CD8-positive, alpha-beta memory T cell (primary cell): ENCODE measurements at regions of chr9 and their contacts with region 1.

Region 1: DNA sequence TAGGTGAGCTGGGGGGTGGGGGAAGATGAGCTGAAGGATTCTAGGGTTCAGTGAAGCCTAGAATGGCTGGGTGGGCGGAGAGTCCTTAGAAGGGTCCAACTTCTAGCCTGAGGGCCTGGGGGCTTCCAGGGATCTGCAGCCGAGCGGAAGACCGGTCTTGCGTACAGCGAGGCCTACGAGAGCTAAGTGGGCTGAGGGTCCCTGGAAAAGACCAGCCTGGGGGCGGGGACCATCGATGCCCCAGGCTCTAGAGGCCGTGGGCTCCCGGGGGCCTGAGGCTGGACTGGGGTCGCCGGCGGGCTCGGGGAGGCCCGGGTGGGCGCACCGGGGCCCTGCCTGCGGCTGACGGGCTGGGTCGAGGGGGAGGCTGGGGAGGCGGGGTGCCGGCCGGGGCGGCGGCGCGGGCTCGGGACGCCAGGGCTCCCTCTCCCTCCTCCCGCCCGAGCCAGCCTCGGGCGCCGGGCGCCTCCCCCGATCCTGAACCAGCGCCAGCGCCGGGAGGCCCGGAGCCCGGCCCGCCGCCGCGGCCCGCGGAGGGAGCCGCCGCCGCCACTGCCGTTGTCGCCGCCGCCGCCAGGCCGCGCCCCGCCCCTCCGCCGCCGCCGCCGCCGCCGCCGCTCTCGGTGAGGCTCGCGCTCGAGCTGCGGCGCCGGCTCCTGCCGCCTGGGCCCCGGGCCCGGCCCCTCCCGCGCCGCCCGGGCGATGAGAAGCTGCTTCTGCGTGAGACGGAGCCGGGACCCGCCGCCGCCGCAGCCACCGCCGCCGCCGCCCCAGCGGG is at the start of gene MVB12B:
- DNase-seq: peak; percentile 46 to 75 (median 64)
- H3K4me3 ChIP-seq: peak within 1 kb of the TSS; percentile 74
- H3K4me3 Mint-ChIP-seq: peak within 1 kb of the TSS; percentile 86 to 97 (median 90)
- H3K27ac ChIP-seq: peak within 1 kb of the TSS; percentile 58
- H3K27ac Mint-ChIP-seq: peak within 1 kb of the TSS; percentile 93 to 99 (median 96)
- H3K4me1 ChIP-seq: peaks cover 45% of the 10 kb centered on the region
- H3K4me1 Mint-ChIP-seq: peaks cover 43 to 52% (median 47%) of the 10 kb centered on the region in 3 donors
- H3K27me3 ChIP-seq: no peaks in the 10 kb centered on the region
- H3K27me3 Mint-ChIP-seq: no peaks in the 10 kb centered on the region
- total RNA-seq, gene MVB12B: 11.0 to 13.1 TPM

Region 2: GRCh38 chr9:126301985-126302603 is 24.3 kb before region 1 on chr9:
- CTCF ChIA-PET with region 1: interaction called, 10 read pairs
- POLR2A ChIA-PET with region 1: no interaction called
- DNase-seq: peak; percentile 22 to 76 (median 46)
- H3K4me3 ChIP-seq: no peak overlapping the region
- H3K4me3 Mint-ChIP-seq: no peak overlapping the region
- H3K27ac ChIP-seq: no peak overlapping the region
- H3K27ac Mint-ChIP-seq: peak overlapping the region in 1 of 8 donors; percentile 7
- H3K4me1 ChIP-seq: no peaks in the 10 kb centered on the region
- H3K4me1 Mint-ChIP-seq: peaks cover 3 to 11% (median 5%) of the 10 kb centered on the region in 3 donors
- H3K27me3 ChIP-seq: no peaks in the 10 kb centered on the region
- H3K27me3 Mint-ChIP-seq: peaks cover 0 to 4% of the 10 kb centered on the region in 2 donors

Region 3: GRCh38 chr9:126804696-126805545 is 478.5 kb after region 1 on chr9 and contains the start of gene ZBTB43:
- CTCF ChIA-PET with region 1: no interaction called
- POLR2A ChIA-PET with region 1: no interaction called
- DNase-seq: peak; percentile 97 to 98 (median 98)
- H3K4me3 ChIP-seq: peak within 1 kb of the TSS; percentile 94
- H3K4me3 Mint-ChIP-seq: peak within 1 kb of the TSS; percentile 92 to 100 (median 95)
- H3K27ac ChIP-seq: peak within 1 kb of the TSS; percentile 96
- H3K27ac Mint-ChIP-seq: peak within 1 kb of the TSS; percentile 94 to 100 (median 99)
- H3K4me1 ChIP-seq: peaks cover 23% of the 10 kb centered on the region
- H3K4me1 Mint-ChIP-seq: peaks cover 39 to 55% (median 52%) of the 10 kb centered on the region in 3 donors
- H3K27me3 ChIP-seq: no peaks in the 10 kb centered on the region
- H3K27me3 Mint-ChIP-seq: peaks cover 0 to 2% of the 10 kb centered on the region in 2 donors
- total RNA-seq, gene ZBTB43: 21.8 to 22.8 TPM